BJ (cell line): ENCODE measurements at regions of chr10 and their contacts with region 1.

Region 1: GRCh38 chr10:105751688-105752087 is 1110.6 kb downstream of the SORCS3 start:
- DNase-seq: no peak
- H3K4me3 ChIP-seq: no peak overlapping the region
- H3K27me3 ChIP-seq: no peaks in the 10 kb centered on the region
- CTCF ChIP-seq: no peak

Region 2: GRCh38 chr10:105727131-105727530 is 24.6 kb before region 1 on chr10:
- CTCF ChIA-PET with region 1: no interaction called
- POLR2A ChIA-PET with region 1: no interaction called
- DNase-seq: no peak
- H3K4me3 ChIP-seq: no peak overlapping the region
- H3K27me3 ChIP-seq: no peaks in the 10 kb centered on the region
- CTCF ChIP-seq: no peak

Region 3: DNA sequence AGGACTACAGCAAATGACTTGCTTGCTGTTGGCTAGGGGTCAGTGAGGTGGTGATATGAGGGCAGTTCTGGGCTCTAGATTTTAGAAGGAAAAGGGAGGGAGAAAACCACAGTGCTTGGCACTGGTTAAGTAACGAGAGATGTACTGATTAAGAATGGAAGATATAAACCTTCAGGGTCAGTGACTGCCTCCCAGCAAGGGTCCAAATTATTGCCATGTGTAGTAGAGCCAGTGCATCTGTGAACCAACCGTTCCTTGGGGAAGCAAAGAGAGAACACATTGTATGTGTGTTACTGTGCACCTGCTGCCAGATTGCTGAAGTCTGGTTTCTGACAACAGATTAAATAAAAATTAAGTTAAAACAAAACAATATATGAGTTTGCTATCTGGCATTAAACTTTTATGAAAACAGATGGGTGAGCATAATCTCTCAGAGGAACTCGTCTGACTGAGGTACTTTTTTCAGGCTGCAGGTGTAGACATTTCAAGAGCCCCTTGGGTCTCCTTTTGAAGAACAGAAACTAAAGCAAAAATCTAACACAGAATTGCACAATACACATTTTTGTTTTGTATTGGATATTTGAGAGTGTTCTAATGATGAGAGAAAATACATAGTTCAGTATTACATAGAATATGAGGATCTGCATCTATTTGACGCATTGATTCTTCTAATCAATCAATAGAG is 10.0 kb after region 1 on chr10:
- CTCF ChIA-PET with region 1: no interaction called
- POLR2A ChIA-PET with region 1: no interaction called
- DNase-seq: no peak
- H3K4me3 ChIP-seq: no peak overlapping the region
- H3K27me3 ChIP-seq: no peaks in the 10 kb centered on the region
- CTCF ChIP-seq: no peak

Region 4: DNA sequence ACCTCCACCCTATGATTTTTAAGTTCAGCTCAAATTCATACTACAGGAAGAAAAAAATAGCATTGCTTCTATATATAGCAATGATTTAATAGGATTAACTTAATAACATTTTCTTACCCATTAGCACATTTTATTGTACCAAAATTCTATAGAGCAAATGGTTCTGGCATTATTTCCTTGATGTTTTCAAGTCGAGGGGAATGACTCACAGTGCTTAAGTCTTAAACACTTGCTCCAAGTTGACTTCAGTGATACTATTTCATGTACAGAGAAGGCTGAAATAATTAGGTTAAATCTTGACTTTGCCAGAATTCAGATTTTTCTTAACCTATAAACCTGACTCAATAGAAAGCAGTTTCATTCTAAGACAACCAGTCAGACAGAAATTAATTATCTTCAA is 23.2 kb after region 1 on chr10:
- CTCF ChIA-PET with region 1: no interaction called
- POLR2A ChIA-PET with region 1: interaction called, 13 read pairs
- DNase-seq: no peak
- H3K4me3 ChIP-seq: no peak overlapping the region
- H3K27me3 ChIP-seq: no peaks in the 10 kb centered on the region
- CTCF ChIP-seq: no peak

Region 5: GRCh38 chr10:105950410-105950809 is 198.7 kb after region 1 on chr10:
- CTCF ChIA-PET with region 1: no interaction called
- POLR2A ChIA-PET with region 1: no interaction called
- DNase-seq: no peak
- H3K4me3 ChIP-seq: no peak overlapping the region
- H3K27me3 ChIP-seq: no peaks in the 10 kb centered on the region
- CTCF ChIP-seq: peak; percentile 82